CD4-positive, alpha-beta T cell (primary cell): ENCODE measurements at regions of chr1 and their contacts with region 1.

Region 1: GRCh38 chr1:107835151-107835670 is 129.8 kb downstream of the VAV3 start:
- DNase-seq: no peak
- ATAC-seq: no peak
- H3K4me3 ChIP-seq: no peak overlapping the region
- H3K4me3 Mint-ChIP-seq: no peak overlapping the region
- H3K27ac ChIP-seq: no peak overlapping the region
- H3K27ac Mint-ChIP-seq: no peak overlapping the region
- H3K4me1 ChIP-seq: peaks cover 4% of the 10 kb centered on the region
- H3K4me1 Mint-ChIP-seq: peaks cover 45% of the 10 kb centered on the region
- H3K27me3 ChIP-seq: no peaks in the 10 kb centered on the region
- H3K27me3 Mint-ChIP-seq: no peaks in the 10 kb centered on the region
- CTCF ChIP-seq: no peak

Region 2: DNA sequence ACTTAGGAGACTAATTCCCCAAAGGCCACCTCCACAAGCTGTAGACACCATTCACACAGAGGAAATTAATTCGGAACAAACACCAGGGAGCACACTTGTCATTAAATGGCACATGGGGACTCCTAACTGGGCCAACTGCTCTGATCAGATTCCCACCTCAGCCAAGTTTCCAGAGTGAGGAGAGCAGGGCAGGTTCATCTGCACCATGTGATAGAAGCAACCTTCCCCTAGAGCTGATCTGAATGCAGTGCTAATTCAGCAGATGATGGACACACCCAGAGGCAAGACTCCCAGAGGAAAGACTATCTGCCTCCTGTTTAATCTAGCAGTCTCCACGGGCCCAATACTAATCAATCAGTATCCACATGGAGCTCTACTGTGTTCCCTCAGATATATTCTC is 17.3 kb before region 1 on chr1:
- CTCF ChIA-PET with region 1: no interaction called
- POLR2A ChIA-PET with region 1: interaction called, 3 read pairs
- intact Hi-C with region 1: loop called in 1 of 2 experiments (anchors 2 kb)
- DNase-seq: no peak
- ATAC-seq: no peak
- H3K4me3 ChIP-seq: no peak overlapping the region
- H3K4me3 Mint-ChIP-seq: no peak overlapping the region
- H3K27ac ChIP-seq: no peak overlapping the region
- H3K27ac Mint-ChIP-seq: no peak overlapping the region
- H3K4me1 ChIP-seq: peaks cover 2% of the 10 kb centered on the region
- H3K4me1 Mint-ChIP-seq: peaks cover 15% of the 10 kb centered on the region
- H3K27me3 ChIP-seq: no peaks in the 10 kb centered on the region
- H3K27me3 Mint-ChIP-seq: no peaks in the 10 kb centered on the region
- CTCF ChIP-seq: no peak

Region 3: DNA sequence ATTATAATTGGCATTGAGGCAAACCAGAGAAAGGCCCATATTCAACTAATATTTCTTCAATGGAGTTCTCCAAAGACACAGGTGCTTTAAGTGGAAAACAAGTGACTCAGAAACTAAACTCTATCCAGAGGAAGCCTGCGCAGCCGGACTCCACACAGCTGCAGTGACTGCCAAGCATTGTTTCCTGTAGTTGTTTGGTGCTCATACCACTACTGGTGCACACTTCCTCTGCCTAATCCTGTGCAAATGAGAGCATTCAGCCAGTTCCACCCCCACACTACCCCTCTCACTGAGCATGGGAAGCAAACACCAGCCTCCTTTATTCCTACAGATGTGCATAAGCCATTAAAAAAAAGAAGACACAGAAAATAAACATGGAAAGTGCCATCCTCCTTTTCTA is 26.9 kb after region 1 on chr1:
- CTCF ChIA-PET with region 1: no interaction called
- POLR2A ChIA-PET with region 1: no interaction called
- intact Hi-C with region 1: no loop called
- DNase-seq: no peak
- ATAC-seq: no peak
- H3K4me3 ChIP-seq: no peak overlapping the region
- H3K4me3 Mint-ChIP-seq: no peak overlapping the region
- H3K27ac ChIP-seq: no peak overlapping the region
- H3K27ac Mint-ChIP-seq: no peak overlapping the region
- H3K4me1 ChIP-seq: peaks cover 3% of the 10 kb centered on the region
- H3K4me1 Mint-ChIP-seq: peaks cover 7% of the 10 kb centered on the region
- H3K27me3 ChIP-seq: no peaks in the 10 kb centered on the region
- H3K27me3 Mint-ChIP-seq: no peaks in the 10 kb centered on the region
- CTCF ChIP-seq: no peak

Region 4: DNA sequence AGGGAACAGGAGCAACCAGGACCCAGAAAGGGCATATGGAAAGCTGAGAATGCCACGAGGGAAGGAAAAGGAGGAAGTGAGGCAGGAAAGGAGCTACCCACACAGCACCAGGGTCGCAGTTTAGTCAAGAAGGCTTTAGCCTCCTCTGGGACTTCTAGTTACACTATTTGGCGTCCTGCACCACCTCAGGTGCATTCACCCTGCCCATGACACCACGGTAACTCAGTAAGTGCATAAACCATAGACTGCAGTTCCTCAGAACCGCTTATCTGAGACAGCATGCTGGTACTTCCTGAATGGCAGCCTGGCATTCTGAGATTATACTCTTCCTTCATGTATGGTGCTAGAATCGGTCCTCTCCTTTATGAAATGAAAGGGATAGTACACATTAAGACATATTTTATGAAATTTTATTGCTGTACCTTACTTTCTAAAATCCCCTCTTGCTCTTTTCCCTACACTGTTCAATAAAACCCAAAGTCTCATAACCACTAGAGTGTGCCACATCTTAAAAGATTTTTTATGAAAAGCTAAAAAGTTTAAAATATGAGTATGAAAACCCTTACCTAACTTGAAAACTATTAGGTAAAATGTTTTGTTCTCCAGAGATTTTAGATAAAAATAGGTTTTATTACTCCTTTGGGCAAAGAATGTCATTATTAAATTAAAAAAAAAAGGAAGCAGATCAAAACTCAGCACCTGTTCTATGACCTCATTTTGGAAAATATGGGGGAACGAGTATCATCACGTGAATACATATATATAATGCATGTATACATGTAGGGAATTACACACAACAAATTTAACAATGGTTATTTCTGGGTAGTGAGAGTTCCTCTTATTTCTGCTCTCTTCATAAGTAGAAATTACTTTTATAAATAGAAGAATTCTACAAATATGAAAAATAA is 62.5 kb after region 1 on chr1:
- CTCF ChIA-PET with region 1: no interaction called
- POLR2A ChIA-PET with region 1: no interaction called
- intact Hi-C with region 1: no loop called
- DNase-seq: peak in 4 of 14 experiments; percentile 10 to 33 (median 20)
- ATAC-seq: peak; percentile 72
- H3K4me3 ChIP-seq: no peak overlapping the region
- H3K4me3 Mint-ChIP-seq: peak overlapping the region; percentile 56
- H3K27ac ChIP-seq: no peak overlapping the region
- H3K27ac Mint-ChIP-seq: peak overlapping the region; percentile 9
- H3K4me1 ChIP-seq: peaks cover 6% of the 10 kb centered on the region
- H3K4me1 Mint-ChIP-seq: peaks cover 39% of the 10 kb centered on the region
- H3K27me3 ChIP-seq: no peaks in the 10 kb centered on the region
- H3K27me3 Mint-ChIP-seq: no peaks in the 10 kb centered on the region
- CTCF ChIP-seq: no peak